ENCODE measurements at regions of chr1 and their contacts with region 1.

Region 1: DNA sequence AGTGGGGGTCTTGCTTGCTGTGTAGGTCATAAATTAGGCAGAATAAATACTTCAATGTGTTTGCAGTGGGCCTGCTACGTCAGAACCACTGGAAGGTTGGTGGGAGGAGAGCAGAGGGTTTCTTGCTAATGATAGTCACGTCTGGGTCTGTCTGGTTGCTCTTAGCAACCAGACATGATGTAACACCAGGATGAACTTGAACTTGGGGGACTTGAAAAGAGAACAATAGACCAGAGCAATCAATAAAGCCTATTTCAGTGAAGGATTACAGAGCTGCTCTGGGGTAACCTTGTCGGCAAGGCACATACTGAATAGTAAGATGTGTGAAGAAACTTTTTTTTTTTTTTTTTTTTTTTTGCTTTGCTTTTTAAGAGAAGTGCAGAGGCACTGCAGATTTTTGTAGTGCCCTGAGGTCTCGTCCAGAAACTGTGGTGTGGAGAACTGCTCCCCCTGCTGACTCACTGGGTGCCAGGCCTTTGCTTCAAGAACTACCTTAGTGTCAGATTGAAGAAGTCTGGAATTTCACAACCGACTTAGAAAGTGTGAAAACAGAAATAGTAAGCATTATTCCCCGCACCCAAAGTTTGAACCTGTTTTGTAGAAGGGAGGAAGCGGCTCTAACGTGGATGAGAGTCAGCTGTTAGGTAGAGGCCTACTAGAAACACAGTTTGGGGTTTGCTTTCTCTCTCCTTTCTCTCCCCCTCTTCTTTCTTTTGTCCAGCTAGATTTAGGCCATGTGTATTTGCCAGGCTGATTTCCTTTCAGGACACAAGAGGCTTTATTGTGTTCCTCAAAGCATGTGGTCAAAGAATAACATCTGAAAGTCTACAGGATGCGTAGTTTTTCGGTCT is 271.6 kb downstream of the TM2D1 start:
- DNase-seq: peak; percentile 91
- ATAC-seq: peak; percentile 81

Region 2: DNA sequence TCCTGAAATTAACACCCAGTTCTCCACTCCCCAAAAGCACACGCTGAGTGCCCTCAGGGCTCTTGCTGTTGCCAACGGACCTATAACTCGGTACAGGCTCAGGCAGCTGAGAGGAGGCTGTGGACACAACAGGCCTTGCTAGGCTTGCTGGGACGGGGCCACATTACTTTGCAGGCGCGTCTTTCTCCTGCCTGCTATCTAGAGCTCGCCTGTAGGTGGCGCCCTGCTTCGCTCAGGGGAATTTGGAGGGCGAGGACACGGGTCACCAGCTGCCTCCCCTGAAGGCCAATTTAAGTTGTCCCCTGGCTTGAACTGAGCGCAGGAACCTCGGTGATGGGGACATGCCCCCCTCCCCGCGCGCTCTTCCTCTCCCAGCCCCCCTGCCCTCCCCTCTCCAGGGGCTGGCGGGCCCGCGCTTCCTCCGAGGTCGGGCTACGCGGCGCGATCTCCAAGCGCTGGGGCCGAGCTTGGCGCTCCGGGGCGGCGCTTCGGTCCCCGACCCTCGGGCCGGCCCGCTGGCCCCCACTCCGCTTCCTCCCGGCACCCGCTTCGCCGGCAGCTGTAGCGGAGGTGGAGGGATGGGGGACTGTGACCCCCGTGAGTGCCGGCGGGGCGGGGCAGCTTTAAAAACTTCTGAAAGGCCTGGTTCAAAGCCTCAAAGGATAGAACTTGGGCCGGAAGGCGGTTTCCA is 403.3 kb before region 1 on chr1:
- intact Hi-C with region 1: loop called (anchors 2 kb)
- DNase-seq: peak; percentile 97
- ATAC-seq: peak; percentile 79

Measured in Right ventricle myocardium superior (tissue), 1 donor.